B cell (primary cell): ENCODE measurements at regions of chr21 and their contacts with region 1.

Region 1: GRCh38 chr21:41217671-41218660 is 50.0 kb downstream of the BACE2 start:
- DNase-seq: no peak
- ATAC-seq: no peak
- H3K4me3 ChIP-seq: no peak overlapping the region
- H3K4me3 Mint-ChIP-seq: no peak overlapping the region
- H3K27ac ChIP-seq: no peak overlapping the region
- H3K27ac Mint-ChIP-seq: no peak overlapping the region
- H3K4me1 ChIP-seq: peaks cover 4 to 7% of the 10 kb centered on the region in 2 donors
- H3K4me1 Mint-ChIP-seq: peaks cover 22% of the 10 kb centered on the region
- H3K27me3 ChIP-seq: no peaks in the 10 kb centered on the region
- H3K27me3 Mint-ChIP-seq: no peaks in the 10 kb centered on the region
- CTCF ChIP-seq: no peak

Region 2: DNA sequence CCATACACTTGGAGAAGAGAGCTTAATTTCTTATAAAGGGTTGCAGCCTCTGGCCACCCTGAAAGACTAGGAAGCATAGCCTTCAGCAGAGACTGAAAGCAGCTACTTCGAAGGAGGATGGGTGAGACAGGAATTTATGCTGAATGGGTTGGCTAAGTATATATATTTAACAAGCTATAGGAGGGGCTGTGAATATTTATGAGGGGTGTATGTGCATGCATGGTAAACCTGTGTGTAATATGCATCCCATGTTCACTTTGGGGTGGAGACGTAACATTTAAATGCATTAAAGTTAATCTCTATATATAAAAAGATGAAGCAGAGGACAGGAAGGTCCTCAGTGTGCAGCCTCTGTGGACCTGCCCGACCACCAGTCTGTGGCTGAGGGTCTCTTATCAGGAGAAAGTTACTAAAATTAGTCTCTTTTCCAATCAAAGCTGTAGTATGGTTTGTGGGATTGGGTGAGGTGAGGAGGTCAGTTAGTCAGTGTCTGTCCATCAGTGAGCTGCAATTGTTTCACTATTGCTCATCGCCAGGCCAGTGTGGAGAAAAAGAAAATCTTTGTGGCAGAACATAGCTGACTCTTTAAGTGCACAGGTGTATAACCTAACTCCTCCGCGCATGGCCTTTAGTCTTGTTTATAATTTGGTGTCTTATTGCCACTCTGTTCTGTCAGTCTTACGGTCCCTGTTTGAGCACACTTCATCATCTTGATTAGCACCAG is 335.6 kb before region 1 on chr21:
- CTCF ChIA-PET with region 1: no interaction called
- POLR2A ChIA-PET with region 1: no interaction called
- intact Hi-C with region 1: no loop called
- DNase-seq: no peak
- ATAC-seq: no peak
- H3K4me3 ChIP-seq: no peak overlapping the region
- H3K4me3 Mint-ChIP-seq: no peak overlapping the region
- H3K27ac ChIP-seq: no peak overlapping the region
- H3K27ac Mint-ChIP-seq: no peak overlapping the region
- H3K4me1 ChIP-seq: no peaks in the 10 kb centered on the region
- H3K4me1 Mint-ChIP-seq: no peaks in the 10 kb centered on the region
- H3K27me3 ChIP-seq: no peaks in the 10 kb centered on the region
- H3K27me3 Mint-ChIP-seq: no peaks in the 10 kb centered on the region
- CTCF ChIP-seq: no peak

Region 3: DNA sequence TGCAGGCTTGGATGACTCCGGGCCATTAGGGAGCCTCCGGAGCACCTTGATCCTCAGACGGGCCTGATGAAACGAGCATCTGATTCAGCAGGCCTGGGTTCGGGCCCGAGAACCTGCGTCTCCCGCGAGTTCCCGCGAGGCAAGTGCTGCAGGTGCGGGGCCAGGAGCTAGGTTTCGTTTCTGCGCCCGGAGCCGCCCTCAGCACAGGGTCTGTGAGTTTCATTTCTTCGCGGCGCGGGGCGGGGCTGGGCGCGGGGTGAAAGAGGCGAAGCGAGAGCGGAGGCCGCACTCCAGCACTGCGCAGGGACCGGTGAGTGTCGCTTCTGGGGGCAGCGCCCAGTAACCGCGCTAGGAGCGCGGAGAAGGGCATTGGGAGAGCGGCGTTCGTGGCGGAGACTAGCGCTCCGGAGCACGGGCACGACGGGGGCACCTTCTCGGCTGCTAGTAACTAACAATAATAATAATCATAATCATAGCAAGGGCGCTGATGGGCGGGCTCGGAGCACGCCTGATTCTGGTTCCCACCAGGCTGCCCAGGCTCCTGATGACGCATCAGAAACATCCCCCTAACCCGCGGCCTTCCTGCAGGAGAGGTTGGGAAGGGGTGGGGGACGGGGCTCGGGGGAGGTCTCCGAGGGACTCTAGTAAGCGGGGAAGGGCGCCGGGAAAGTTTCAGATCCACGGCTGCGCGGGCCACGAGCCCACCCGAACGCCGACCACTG is 208.1 kb after region 1 on chr21 and contains the start of gene MX1:
- CTCF ChIA-PET with region 1: no interaction called
- POLR2A ChIA-PET with region 1: interaction called, 11 read pairs
- intact Hi-C with region 1: no loop called
- DNase-seq: peak; percentile 82
- ATAC-seq: peak; percentile 95
- H3K4me3 ChIP-seq: peak within 1 kb of the TSS; percentile 57 to 93 (median 74)
- H3K4me3 Mint-ChIP-seq: peak within 1 kb of the TSS; percentile 99
- H3K27ac ChIP-seq: peak within 1 kb of the TSS; percentile 69 to 83
- H3K27ac Mint-ChIP-seq: peak within 1 kb of the TSS; percentile 98
- H3K4me1 ChIP-seq: peaks cover 55 to 71% of the 10 kb centered on the region in 2 donors
- H3K4me1 Mint-ChIP-seq: peaks cover 75% of the 10 kb centered on the region
- H3K27me3 ChIP-seq: no peaks in the 10 kb centered on the region
- H3K27me3 Mint-ChIP-seq: no peaks in the 10 kb centered on the region
- CTCF ChIP-seq: no peak
- total RNA-seq, gene MX1: 61.8 and 62.9 TPM in 2 replicates